ENCODE measurements at regions of chr5 and their contacts with region 1.

Region 1: GRCh38 chr5:54009357-54009756 is 301.0 kb downstream of the ARL15 start:
- DNase-seq: peak; percentile 62
- ATAC-seq: peak; percentile 81
- H3K4me3 ChIP-seq: no peak overlapping the region; a peak in 1 of 6 replicates
- H3K27ac ChIP-seq: peak overlapping the region; percentile 68
- H3K4me1 ChIP-seq: peaks cover 38% of the 10 kb centered on the region
- H3K27me3 ChIP-seq: no peaks in the 10 kb centered on the region
- CTCF ChIP-seq: no peak
- EP300 ChIP-seq: no peak
- POLR2A ChIP-seq: no peak
- RAD21 ChIP-seq: no peak

Region 2: GRCh38 chr5:53942724-53943123 is 66.6 kb before region 1 on chr5:
- CTCF ChIA-PET with region 1: no interaction called
- POLR2A ChIA-PET with region 1: no interaction called
- in situ Hi-C with region 1: no loop called
- intact Hi-C with region 1: loop called (anchors 1 kb)
- DNase-seq: no peak
- ATAC-seq: no peak
- H3K4me3 ChIP-seq: no peak overlapping the region
- H3K27ac ChIP-seq: no peak overlapping the region
- H3K4me1 ChIP-seq: peaks cover 11% of the 10 kb centered on the region
- H3K27me3 ChIP-seq: no peaks in the 10 kb centered on the region; a peak in 1 of 5 replicates
- CTCF ChIP-seq: no peak
- EP300 ChIP-seq: no peak
- POLR2A ChIP-seq: no peak
- RAD21 ChIP-seq: no peak

Region 3: GRCh38 chr5:54090495-54091084 is 81.2 kb after region 1 on chr5:
- CTCF ChIA-PET with region 1: no interaction called
- POLR2A ChIA-PET with region 1: no interaction called
- in situ Hi-C with region 1: no loop called
- intact Hi-C with region 1: no loop called
- DNase-seq: peak; percentile 2
- ATAC-seq: no peak
- H3K4me3 ChIP-seq: no peak overlapping the region
- H3K27ac ChIP-seq: no peak overlapping the region
- H3K4me1 ChIP-seq: no peaks in the 10 kb centered on the region
- H3K27me3 ChIP-seq: no peaks in the 10 kb centered on the region
- CTCF ChIP-seq: no peak
- EP300 ChIP-seq: no peak
- POLR2A ChIP-seq: no peak
- RAD21 ChIP-seq: no peak

Measured in HepG2 (cell line).